PC-3 (cell line): ENCODE measurements at regions of chr1 and their contacts with region 1.

Region 1: GRCh38 chr1:214632091-214632490 is 29.1 kb downstream of the CENPF start:
- DNase-seq: no peak
- ATAC-seq: no peak
- H3K4me3 ChIP-seq: no peak overlapping the region
- H3K27ac ChIP-seq: no peak overlapping the region
- H3K4me1 ChIP-seq: peaks cover 4% of the 10 kb centered on the region; the same call in 1 of the 2 replicates
- H3K27me3 ChIP-seq: no peaks in the 10 kb centered on the region
- CTCF ChIP-seq: no peak

Region 2: DNA sequence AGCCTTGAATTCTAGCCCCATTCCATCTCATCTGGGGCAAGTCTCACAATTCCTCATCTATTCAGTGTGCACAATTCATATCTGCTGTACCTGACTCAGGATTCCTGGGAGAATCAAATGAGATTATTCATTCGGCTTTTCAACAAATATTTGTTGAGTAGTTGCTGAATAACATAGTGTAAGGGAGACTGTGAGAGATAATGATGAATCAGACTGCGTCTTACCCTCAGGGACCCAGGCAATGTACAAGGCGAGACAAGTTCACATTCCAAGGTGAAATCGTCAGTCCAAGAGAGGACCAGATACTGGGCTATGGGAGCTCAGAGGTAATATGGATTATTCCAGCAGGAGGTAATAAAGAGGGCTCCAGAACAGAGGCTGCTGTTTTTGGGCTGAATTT is 419.0 kb before region 1 on chr1:
- CTCF ChIA-PET with region 1: no interaction called
- POLR2A ChIA-PET with region 1: no interaction called
- intact Hi-C with region 1: loop called (anchors 5 kb)
- DNase-seq: peak; percentile 94
- ATAC-seq: peak; percentile 84
- H3K4me3 ChIP-seq: peak overlapping the region; percentile 0; the same call in 1 of the 2 replicates
- H3K27ac ChIP-seq: peak overlapping the region; percentile 19; the same call in 1 of the 2 replicates
- H3K4me1 ChIP-seq: peaks cover 56% of the 10 kb centered on the region
- H3K27me3 ChIP-seq: no peaks in the 10 kb centered on the region
- CTCF ChIP-seq: no peak

Region 3: DNA sequence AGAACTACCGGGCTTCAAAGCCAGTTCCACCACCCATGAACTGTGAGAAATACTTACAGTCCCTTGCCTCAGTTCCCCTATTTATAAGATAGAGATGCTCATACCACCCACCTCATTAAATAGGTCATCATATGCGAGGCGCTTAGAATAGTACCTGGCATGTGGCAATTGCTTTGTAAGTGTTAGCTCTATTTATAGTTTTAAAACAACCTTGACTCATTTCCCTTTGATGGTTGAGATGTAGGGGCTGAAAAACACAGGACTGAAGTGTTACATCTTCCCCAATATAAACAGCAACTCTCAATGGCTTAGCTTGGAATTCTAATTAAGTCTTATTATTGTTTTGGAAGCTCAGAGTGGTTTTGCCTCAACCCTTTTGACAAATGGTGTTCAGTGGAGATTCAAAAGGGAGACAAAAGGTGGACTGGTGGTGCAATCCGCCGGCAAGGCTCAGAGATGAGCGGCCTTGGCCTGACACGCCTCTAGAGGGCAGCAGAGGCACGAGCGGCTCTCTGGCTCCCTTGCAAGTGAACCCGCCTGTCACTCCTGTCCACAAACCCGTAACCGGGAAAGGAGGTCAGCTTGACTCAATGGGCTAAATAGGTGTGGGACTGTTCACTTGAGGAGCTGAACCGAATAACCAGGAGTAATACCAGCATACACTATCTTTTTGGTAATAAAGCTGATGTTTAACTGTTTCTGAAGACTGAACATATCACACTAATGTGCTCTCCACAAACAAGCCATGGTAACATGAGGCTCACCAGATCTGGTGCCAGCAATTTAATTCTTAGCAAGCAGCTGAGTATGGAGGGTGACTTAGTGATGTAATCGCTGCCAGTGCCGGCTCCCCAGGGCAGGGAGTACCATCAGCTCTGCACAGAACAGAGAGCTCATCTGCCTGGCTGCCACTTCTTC is 370.6 kb before region 1 on chr1:
- CTCF ChIA-PET with region 1: no interaction called
- POLR2A ChIA-PET with region 1: no interaction called
- intact Hi-C with region 1: loop called (anchors 5 kb)
- DNase-seq: peak; percentile 89
- ATAC-seq: peak; percentile 99
- H3K4me3 ChIP-seq: peak overlapping the region; percentile 13; the same call in 1 of the 2 replicates
- H3K27ac ChIP-seq: no peak overlapping the region
- H3K4me1 ChIP-seq: peaks cover 15% of the 10 kb centered on the region
- H3K27me3 ChIP-seq: no peaks in the 10 kb centered on the region
- CTCF ChIP-seq: peak; percentile 99

Region 4: DNA sequence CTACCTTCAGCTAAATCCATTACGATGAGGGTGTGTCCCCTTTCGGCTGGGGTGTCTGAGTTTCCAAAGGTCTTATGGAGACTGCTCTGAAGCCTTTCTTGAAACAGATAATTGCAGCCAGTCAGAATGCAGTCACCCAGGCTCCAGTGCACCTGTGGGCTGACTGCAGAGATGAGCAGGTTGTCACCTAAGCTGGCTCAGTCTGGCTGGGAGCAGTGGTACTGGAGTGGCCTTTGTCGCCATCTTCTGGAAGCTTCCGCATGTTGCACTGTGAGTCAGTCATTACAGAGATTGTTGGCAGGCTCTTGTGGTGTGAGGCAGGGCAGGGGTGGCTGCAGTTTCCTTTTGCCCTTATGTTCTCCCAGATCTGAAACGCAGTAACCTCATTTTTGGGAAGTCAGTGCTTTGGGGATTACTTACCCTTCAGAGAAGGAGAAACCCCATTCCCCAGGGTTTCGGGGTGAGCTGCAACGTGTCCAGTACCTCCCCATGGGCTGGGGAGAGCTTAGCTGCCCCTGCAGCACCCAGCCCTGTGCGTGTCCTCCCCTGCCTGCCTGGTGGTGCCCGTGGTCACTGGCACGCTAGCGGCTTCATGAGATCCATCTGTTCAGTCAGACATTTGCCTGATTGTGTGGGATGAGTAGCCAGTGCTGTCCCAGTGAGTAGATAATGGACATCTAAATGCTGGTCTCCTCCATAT is 303.2 kb before region 1 on chr1:
- CTCF ChIA-PET with region 1: interaction called, 22 read pairs
- POLR2A ChIA-PET with region 1: no interaction called
- intact Hi-C with region 1: loop called (anchors 1 kb)
- DNase-seq: peak; percentile 96
- ATAC-seq: peak; percentile 93
- H3K4me3 ChIP-seq: no peak overlapping the region
- H3K27ac ChIP-seq: no peak overlapping the region
- H3K4me1 ChIP-seq: peaks cover 4% of the 10 kb centered on the region
- H3K27me3 ChIP-seq: no peaks in the 10 kb centered on the region
- CTCF ChIP-seq: peak; percentile 96

Region 5: GRCh38 chr1:214476958-214477870 is 154.9 kb before region 1 on chr1:
- CTCF ChIA-PET with region 1: no interaction called
- POLR2A ChIA-PET with region 1: no interaction called
- intact Hi-C with region 1: loop called (anchors 5 kb)
- DNase-seq: no peak
- ATAC-seq: no peak
- H3K4me3 ChIP-seq: no peak overlapping the region; the same call in 1 of the 2 replicates
- H3K27ac ChIP-seq: peak overlapping the region; percentile 56; the same call in 1 of the 2 replicates
- H3K4me1 ChIP-seq: peaks cover 39% of the 10 kb centered on the region
- H3K27me3 ChIP-seq: no peaks in the 10 kb centered on the region
- CTCF ChIP-seq: no peak

Region 6: GRCh38 chr1:214590696-214591095 is 41.4 kb before region 1 on chr1:
- CTCF ChIA-PET with region 1: no interaction called
- POLR2A ChIA-PET with region 1: no interaction called
- intact Hi-C with region 1: loop called (anchors 2 kb)
- DNase-seq: peak; percentile 46
- ATAC-seq: peak; percentile 68
- H3K4me3 ChIP-seq: no peak overlapping the region
- H3K27ac ChIP-seq: no peak overlapping the region
- H3K4me1 ChIP-seq: no peaks in the 10 kb centered on the region
- H3K27me3 ChIP-seq: no peaks in the 10 kb centered on the region
- CTCF ChIP-seq: peak; percentile 61

Region 7: DNA sequence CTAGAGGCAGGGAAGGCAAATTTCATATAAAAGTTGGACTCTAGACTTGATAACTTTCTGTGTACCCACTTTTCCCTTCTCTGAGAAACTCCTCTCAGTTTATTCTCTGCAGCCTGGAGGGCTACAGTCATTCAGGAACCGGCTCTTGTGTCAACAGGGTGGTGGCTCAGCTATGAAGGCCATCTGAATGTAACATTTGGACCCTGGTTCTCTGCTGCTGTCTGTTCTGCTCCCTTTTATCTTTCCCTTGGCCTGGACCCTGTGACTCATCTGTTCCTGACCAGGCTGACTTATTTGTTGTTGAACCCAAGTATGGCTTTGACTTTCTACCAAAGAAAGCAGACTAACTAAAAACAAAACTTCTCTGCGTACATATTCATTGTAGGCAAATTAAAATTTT is 46.3 kb after region 1 on chr1:
- CTCF ChIA-PET with region 1: no interaction called
- POLR2A ChIA-PET with region 1: no interaction called
- intact Hi-C with region 1: no loop called
- DNase-seq: peak; percentile 88
- ATAC-seq: peak; percentile 97
- H3K4me3 ChIP-seq: no peak overlapping the region
- H3K27ac ChIP-seq: peak overlapping the region; percentile 48
- H3K4me1 ChIP-seq: peaks cover 21% of the 10 kb centered on the region
- H3K27me3 ChIP-seq: no peaks in the 10 kb centered on the region
- CTCF ChIP-seq: no peak